ENCODE measurements at regions of chr2 and their contacts with region 1.

Region 1: DNA sequence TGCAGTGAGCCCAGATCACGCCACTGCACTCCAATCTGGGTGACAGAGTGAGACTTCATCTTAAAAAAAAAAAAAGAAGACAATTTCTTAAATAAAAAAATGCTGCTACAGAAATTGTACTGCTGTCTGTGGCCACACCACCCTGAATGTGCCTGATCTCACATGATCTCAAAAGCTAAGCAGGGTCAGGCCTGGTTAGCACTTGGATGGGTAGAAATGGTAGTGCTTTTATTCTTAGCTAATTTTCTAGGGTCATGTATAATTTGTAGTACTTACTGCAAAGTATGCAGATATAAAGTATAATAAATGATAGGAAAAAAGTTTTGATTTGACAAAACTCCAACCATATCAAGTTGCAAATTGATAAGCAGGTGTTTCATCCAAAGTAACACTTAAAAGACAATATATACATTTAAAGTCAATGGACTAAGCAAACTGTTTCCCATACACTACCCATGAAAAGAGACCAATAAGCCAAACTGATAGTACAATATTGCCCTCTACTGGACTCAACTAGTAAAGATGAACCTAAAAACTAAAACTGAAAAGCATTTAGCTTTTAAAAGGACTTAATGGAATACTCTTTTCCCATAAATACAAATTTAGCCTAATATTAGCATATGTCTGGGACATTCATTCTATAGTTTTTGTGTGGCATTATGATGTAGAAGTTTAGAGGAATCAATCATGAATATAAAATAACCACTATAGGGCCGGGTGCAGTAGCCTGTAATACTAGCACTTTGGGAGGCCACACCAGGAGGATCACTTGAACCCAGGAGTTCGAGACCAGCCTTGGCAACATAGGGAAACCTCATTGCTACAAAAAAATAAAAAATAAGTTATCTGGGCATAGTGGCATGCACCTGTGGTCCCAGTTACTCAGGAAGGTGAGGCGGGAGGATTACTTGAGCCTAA is 18.6 kb upstream of the PEX13 start:
- DNase-seq: peak in 1 of 2 experiments; percentile 38
- H3K4me3 ChIP-seq: no peak overlapping the region
- H3K4me3 Mint-ChIP-seq: no peak overlapping the region
- H3K27ac Mint-ChIP-seq: no peak overlapping the region
- H3K4me1 ChIP-seq: no peaks in the 10 kb centered on the region
- H3K4me1 Mint-ChIP-seq: no peaks in the 10 kb centered on the region
- H3K27me3 ChIP-seq: no peaks in the 10 kb centered on the region
- H3K27me3 Mint-ChIP-seq: no peaks in the 10 kb centered on the region
- CTCF ChIP-seq: peak; percentile 43 to 49

Region 2: GRCh38 chr2:60331115-60331805 is 667.6 kb before region 1 on chr2:
- CTCF ChIA-PET with region 1: no interaction called
- POLR2A ChIA-PET with region 1: no interaction called
- intact Hi-C with region 1: no loop called
- DNase-seq: no peak
- H3K4me3 ChIP-seq: no peak overlapping the region
- H3K4me3 Mint-ChIP-seq: no peak overlapping the region
- H3K27ac Mint-ChIP-seq: no peak overlapping the region
- H3K4me1 ChIP-seq: no peaks in the 10 kb centered on the region
- H3K4me1 Mint-ChIP-seq: peaks cover 7% of the 10 kb centered on the region
- H3K27me3 ChIP-seq: no peaks in the 10 kb centered on the region
- H3K27me3 Mint-ChIP-seq: peaks cover 3% of the 10 kb centered on the region
- CTCF ChIP-seq: no peak

Region 3: DNA sequence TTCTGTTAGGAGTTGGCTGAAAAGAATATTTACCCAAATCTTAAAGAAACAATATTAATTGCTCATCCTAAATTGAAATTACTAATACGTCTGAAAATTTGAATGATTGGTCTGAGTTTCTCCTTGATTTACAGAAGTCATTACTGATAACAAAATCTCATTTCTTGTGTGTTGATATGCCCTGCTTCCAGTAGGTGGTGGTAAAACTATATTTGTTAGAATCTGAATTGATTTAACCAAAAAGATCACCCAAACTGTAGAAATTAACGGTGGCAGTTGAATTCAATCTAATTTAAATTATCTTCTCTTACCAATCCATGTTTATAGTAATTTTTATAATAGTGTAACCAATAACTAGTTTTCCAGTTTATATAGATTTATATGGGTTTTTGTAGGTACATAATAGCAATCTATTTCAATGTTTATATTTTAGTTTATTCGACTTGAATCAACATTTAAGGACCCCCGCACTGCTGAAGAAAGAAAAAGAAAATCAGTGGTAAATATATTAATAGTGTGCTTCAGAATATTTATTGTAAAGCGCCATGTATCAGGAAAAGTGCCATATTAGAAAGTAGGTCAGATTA is 204.5 kb before region 1 on chr2:
- CTCF ChIA-PET with region 1: no interaction called
- POLR2A ChIA-PET with region 1: no interaction called
- intact Hi-C with region 1: loop called (anchors 1 kb)
- DNase-seq: no peak
- H3K4me3 ChIP-seq: no peak overlapping the region
- H3K4me3 Mint-ChIP-seq: no peak overlapping the region
- H3K27ac Mint-ChIP-seq: no peak overlapping the region
- H3K4me1 ChIP-seq: no peaks in the 10 kb centered on the region
- H3K4me1 Mint-ChIP-seq: peaks cover 8% of the 10 kb centered on the region
- H3K27me3 ChIP-seq: no peaks in the 10 kb centered on the region
- H3K27me3 Mint-ChIP-seq: no peaks in the 10 kb centered on the region
- CTCF ChIP-seq: peak; percentile 42 to 58

Region 4: GRCh38 chr2:60806988-60807681 is 191.8 kb before region 1 on chr2:
- CTCF ChIA-PET with region 1: interaction called, 18 read pairs
- POLR2A ChIA-PET with region 1: no interaction called
- intact Hi-C with region 1: loop called (anchors 1 kb)
- DNase-seq: no peak
- H3K4me3 ChIP-seq: no peak overlapping the region
- H3K4me3 Mint-ChIP-seq: no peak overlapping the region
- H3K27ac Mint-ChIP-seq: no peak overlapping the region
- H3K4me1 ChIP-seq: no peaks in the 10 kb centered on the region
- H3K4me1 Mint-ChIP-seq: peaks cover 6% of the 10 kb centered on the region
- H3K27me3 ChIP-seq: no peaks in the 10 kb centered on the region
- H3K27me3 Mint-ChIP-seq: no peaks in the 10 kb centered on the region
- CTCF ChIP-seq: no peak

Region 5: GRCh38 chr2:60966507-60967405 is 32.1 kb before region 1 on chr2:
- CTCF ChIA-PET with region 1: no interaction called
- POLR2A ChIA-PET with region 1: no interaction called
- intact Hi-C with region 1: no loop called
- DNase-seq: no peak
- H3K4me3 ChIP-seq: no peak overlapping the region
- H3K4me3 Mint-ChIP-seq: no peak overlapping the region
- H3K27ac Mint-ChIP-seq: no peak overlapping the region
- H3K4me1 ChIP-seq: 0 out of 2 replicates have a peak, but pooled peaks cover 3% of the 10 kb centered on the region
- H3K4me1 Mint-ChIP-seq: peaks cover 7% of the 10 kb centered on the region
- H3K27me3 ChIP-seq: no peaks in the 10 kb centered on the region
- H3K27me3 Mint-ChIP-seq: no peaks in the 10 kb centered on the region
- CTCF ChIP-seq: no peak